ENCODE measurements at regions of chr3 and their contacts with region 1.

Region 1: DNA sequence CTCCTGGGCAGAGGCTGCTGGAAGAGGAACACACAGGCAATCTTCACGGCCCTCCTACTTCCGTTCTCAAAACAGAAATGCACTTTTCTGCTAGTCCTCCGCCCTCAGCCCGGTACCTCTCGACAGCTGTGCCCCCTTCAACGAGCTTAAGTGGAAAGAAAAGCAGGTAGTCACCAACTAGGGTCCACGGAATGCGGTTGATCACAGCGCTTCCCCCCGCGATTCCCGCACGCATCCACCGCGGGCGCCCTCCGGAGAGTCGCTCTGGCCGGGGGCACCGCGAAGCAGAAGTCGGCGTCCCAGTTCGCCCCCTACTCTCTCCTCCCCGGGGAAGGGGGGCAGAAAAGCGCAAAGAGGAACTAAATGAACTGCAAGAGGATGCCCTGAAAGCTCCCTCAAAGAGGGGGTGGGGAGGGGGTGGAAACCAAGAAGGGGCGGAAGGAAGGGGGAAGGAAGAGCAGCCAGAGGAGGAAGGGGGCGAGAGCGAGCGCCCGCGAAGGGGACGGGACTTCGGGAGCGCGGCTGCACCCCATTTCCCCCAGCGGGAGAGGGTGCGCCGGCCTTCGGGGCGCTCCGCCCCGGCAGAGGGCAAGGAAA is 746 bp downstream of the ACAP2 start:
- DNase-seq: peak in 33 of 35 experiments; percentile 26 to 66 (median 41)
- ATAC-seq: peak; percentile 2 to 15 (median 10)
- H3K4me3 ChIP-seq: peak overlapping the region; percentile 90
- H3K4me3 Mint-ChIP-seq: peak overlapping the region; percentile 92 to 98 (median 94)
- H3K27ac ChIP-seq: peak overlapping the region; percentile 71
- H3K27ac Mint-ChIP-seq: peak overlapping the region; percentile 87 to 89
- H3K4me1 ChIP-seq: peaks cover 28 to 38% of the 10 kb centered on the region in 2 experiments
- H3K4me1 Mint-ChIP-seq: peaks cover 50 to 65% (median 60%) of the 10 kb centered on the region in 3 donors
- H3K27me3 ChIP-seq: no peaks in the 10 kb centered on the region
- H3K27me3 Mint-ChIP-seq: no peaks in the 10 kb centered on the region

Region 2: GRCh38 chr3:194654443-194654842 is 787.6 kb before region 1 on chr3:
- CTCF ChIA-PET with region 1: no interaction called
- POLR2A ChIA-PET with region 1: interaction called in 1 of 2 experiments, 10 read pairs
- DNase-seq: no peak
- ATAC-seq: no peak
- H3K4me3 ChIP-seq: no peak overlapping the region
- H3K4me3 Mint-ChIP-seq: no peak overlapping the region
- H3K27ac ChIP-seq: no peak overlapping the region
- H3K27ac Mint-ChIP-seq: peak overlapping the region in 1 of 2 donors; percentile 53
- H3K4me1 ChIP-seq: no peaks in the 10 kb centered on the region
- H3K4me1 Mint-ChIP-seq: peaks cover 6 to 15% (median 14%) of the 10 kb centered on the region in 3 donors
- H3K27me3 ChIP-seq: no peaks in the 10 kb centered on the region
- H3K27me3 Mint-ChIP-seq: no peaks in the 10 kb centered on the region